ENCODE measurements at regions of chr6 and their contacts with region 1.

Region 1: GRCh38 chr6:145189841-145190240 is 545.5 kb downstream of the EPM2A start:
- DNase-seq: no peak
- ATAC-seq: no peak
- H3K4me3 Mint-ChIP-seq: no peak overlapping the region
- H3K27ac Mint-ChIP-seq: no peak overlapping the region
- H3K4me1 Mint-ChIP-seq: peaks cover 7% of the 10 kb centered on the region
- H3K27me3 Mint-ChIP-seq: no peaks in the 10 kb centered on the region
- CTCF ChIP-seq: no peak

Region 2: GRCh38 chr6:145206247-145206907 is 16.5 kb after region 1 on chr6:
- CTCF ChIA-PET with region 1: no interaction called
- POLR2A ChIA-PET with region 1: no interaction called
- DNase-seq: no peak
- ATAC-seq: no peak
- H3K4me3 Mint-ChIP-seq: no peak overlapping the region
- H3K27ac Mint-ChIP-seq: no peak overlapping the region
- H3K4me1 Mint-ChIP-seq: no peaks in the 10 kb centered on the region
- H3K27me3 Mint-ChIP-seq: no peaks in the 10 kb centered on the region; the same call in 1 of the 2 replicates
- CTCF ChIP-seq: no peak

Region 3: DNA sequence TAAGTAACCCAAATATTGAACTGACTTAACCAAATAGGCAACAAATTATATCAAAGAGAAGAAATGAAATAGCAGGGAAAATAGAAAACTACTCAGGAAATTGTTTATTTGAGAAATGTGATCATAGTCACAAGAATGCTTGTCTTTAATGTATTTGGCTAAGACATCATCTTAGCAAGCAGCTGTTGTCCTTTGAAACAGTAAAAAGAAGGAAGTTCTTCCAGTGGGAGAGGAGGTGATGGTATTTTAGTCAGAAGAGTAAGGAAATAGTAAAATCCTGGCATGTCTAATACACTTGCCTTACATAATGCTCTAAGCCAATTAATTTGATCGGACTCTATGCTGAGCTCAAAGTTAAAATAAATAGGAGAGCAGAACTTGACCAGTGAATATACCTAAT is 419.0 kb after region 1 on chr6:
- CTCF ChIA-PET with region 1: no interaction called
- POLR2A ChIA-PET with region 1: interaction called, 10 read pairs
- DNase-seq: no peak
- ATAC-seq: no peak
- H3K4me3 Mint-ChIP-seq: no peak overlapping the region
- H3K27ac Mint-ChIP-seq: no peak overlapping the region
- H3K4me1 Mint-ChIP-seq: no peaks in the 10 kb centered on the region
- H3K27me3 Mint-ChIP-seq: no peaks in the 10 kb centered on the region; the same call in none of the 2 replicates
- CTCF ChIP-seq: no peak